ENCODE measurements at regions of chr6 and their contacts with region 1.

Region 1: DNA sequence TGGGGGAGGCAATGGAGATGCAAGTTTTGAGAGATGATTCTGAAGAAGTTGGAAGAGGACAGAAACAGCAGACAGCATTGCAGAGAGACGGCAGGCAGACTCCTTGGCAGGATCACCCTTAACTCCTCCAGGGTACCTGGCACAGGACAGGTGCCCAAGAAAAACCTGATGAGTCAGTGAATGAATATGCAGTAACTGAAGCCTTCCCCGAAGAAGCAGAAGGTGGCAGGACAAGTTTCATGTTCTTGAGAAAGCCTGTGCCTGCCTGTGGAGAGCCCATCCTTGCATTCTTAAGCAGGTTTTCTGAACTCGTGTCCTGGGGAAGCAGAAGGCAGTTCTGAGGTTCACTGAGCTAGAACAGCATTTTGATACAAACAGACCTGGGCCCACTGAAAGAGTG is 79.6 kb upstream of the SASH1 start:
- DNase-seq: no peak
- H3K4me3 ChIP-seq: no peak overlapping the region
- H3K4me3 Mint-ChIP-seq: no peak overlapping the region
- H3K27ac Mint-ChIP-seq: peak overlapping the region; percentile 85
- H3K4me1 ChIP-seq: peaks cover 34% of the 10 kb centered on the region
- H3K4me1 Mint-ChIP-seq: peaks cover 34% of the 10 kb centered on the region
- H3K27me3 ChIP-seq: no peaks in the 10 kb centered on the region
- H3K27me3 Mint-ChIP-seq: no peaks in the 10 kb centered on the region
- CTCF ChIP-seq: no peak

Region 2: GRCh38 chr6:147633179-147633578 is 629.8 kb before region 1 on chr6:
- CTCF ChIA-PET with region 1: no interaction called
- POLR2A ChIA-PET with region 1: no interaction called
- intact Hi-C with region 1: loop called (anchors 5 kb)
- DNase-seq: no peak
- H3K4me3 ChIP-seq: no peak overlapping the region
- H3K4me3 Mint-ChIP-seq: no peak overlapping the region
- H3K27ac Mint-ChIP-seq: no peak overlapping the region
- H3K4me1 ChIP-seq: 0 out of 2 replicates have a peak, but pooled peaks cover 4% of the 10 kb centered on the region
- H3K4me1 Mint-ChIP-seq: no peaks in the 10 kb centered on the region
- H3K27me3 ChIP-seq: no peaks in the 10 kb centered on the region
- H3K27me3 Mint-ChIP-seq: no peaks in the 10 kb centered on the region
- CTCF ChIP-seq: no peak

Region 3: GRCh38 chr6:148004651-148005050 is 258.4 kb before region 1 on chr6:
- CTCF ChIA-PET with region 1: no interaction called
- POLR2A ChIA-PET with region 1: no interaction called
- intact Hi-C with region 1: no loop called
- DNase-seq: no peak
- H3K4me3 ChIP-seq: no peak overlapping the region
- H3K4me3 Mint-ChIP-seq: no peak overlapping the region
- H3K27ac Mint-ChIP-seq: no peak overlapping the region
- H3K4me1 ChIP-seq: no peaks in the 10 kb centered on the region
- H3K4me1 Mint-ChIP-seq: peaks cover 9% of the 10 kb centered on the region
- H3K27me3 ChIP-seq: no peaks in the 10 kb centered on the region
- H3K27me3 Mint-ChIP-seq: no peaks in the 10 kb centered on the region
- CTCF ChIP-seq: no peak

Region 4: DNA sequence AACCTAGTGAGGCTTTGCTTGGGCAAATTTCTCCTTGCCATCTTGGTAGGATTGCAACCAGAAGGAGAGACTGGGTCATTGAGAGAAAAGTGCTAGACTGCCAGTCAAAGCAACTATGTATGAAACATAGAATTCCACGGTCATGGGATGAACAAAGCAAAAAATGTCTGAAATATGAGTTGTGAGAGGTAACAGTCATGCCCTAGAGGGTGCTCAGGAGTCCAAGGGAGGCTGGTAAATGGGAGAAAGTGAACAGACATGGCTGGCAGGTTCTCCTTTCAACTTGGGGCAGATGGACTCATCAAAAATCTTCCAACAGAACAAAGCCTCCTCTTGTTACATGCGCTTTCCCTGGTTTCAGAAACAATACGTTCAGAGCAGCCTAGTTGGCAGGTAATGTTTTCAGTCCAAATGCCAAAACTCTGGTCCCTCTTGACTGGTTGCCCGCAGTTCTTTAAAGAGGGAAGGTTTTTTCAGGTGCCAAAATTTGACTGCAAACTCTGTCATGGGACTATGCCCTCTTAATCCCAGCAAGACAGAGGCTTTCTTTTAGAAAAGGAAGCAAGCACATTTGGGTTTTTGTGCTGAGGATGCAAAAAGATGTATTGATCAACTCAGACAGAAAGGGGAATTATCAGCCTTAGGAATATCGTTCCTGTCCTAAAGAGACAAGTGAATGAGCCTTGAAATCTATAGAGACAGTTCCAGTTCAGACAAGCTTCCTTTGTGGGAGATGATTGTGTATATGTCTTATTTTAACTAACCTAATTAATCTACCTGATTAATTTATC is 11.1 kb after region 1 on chr6:
- CTCF ChIA-PET with region 1: no interaction called
- POLR2A ChIA-PET with region 1: no interaction called
- intact Hi-C with region 1: no loop called
- DNase-seq: no peak
- H3K4me3 ChIP-seq: no peak overlapping the region
- H3K4me3 Mint-ChIP-seq: no peak overlapping the region
- H3K27ac Mint-ChIP-seq: no peak overlapping the region
- H3K4me1 ChIP-seq: no peaks in the 10 kb centered on the region
- H3K4me1 Mint-ChIP-seq: no peaks in the 10 kb centered on the region
- H3K27me3 ChIP-seq: no peaks in the 10 kb centered on the region
- H3K27me3 Mint-ChIP-seq: no peaks in the 10 kb centered on the region
- CTCF ChIP-seq: no peak

Region 5: GRCh38 chr6:148307424-148308204 is 44.6 kb after region 1 on chr6:
- CTCF ChIA-PET with region 1: no interaction called
- POLR2A ChIA-PET with region 1: interaction called, 8 read pairs
- intact Hi-C with region 1: loop called (anchors 1 kb)
- DNase-seq: peak; percentile 58 to 74
- H3K4me3 ChIP-seq: no peak overlapping the region
- H3K4me3 Mint-ChIP-seq: no peak overlapping the region
- H3K27ac Mint-ChIP-seq: peak overlapping the region; percentile 86
- H3K4me1 ChIP-seq: peaks cover 27% of the 10 kb centered on the region
- H3K4me1 Mint-ChIP-seq: peaks cover 25% of the 10 kb centered on the region
- H3K27me3 ChIP-seq: no peaks in the 10 kb centered on the region
- H3K27me3 Mint-ChIP-seq: no peaks in the 10 kb centered on the region
- CTCF ChIP-seq: no peak

Region 6: GRCh38 chr6:148342357-148343046 is 79.5 kb after region 1 on chr6 and contains the start of gene SASH1:
- CTCF ChIA-PET with region 1: no interaction called
- POLR2A ChIA-PET with region 1: no interaction called
- intact Hi-C with region 1: loop called (anchors 1 kb)
- DNase-seq: peak; percentile 82 to 84
- H3K4me3 ChIP-seq: peak within 1 kb of the TSS; percentile 84
- H3K4me3 Mint-ChIP-seq: peak within 1 kb of the TSS; percentile 84
- H3K27ac Mint-ChIP-seq: peak within 1 kb of the TSS; percentile 98
- H3K4me1 ChIP-seq: peaks cover 20% of the 10 kb centered on the region
- H3K4me1 Mint-ChIP-seq: peaks cover 19% of the 10 kb centered on the region
- H3K27me3 ChIP-seq: no peaks in the 10 kb centered on the region
- H3K27me3 Mint-ChIP-seq: no peaks in the 10 kb centered on the region
- CTCF ChIP-seq: no peak
- total RNA-seq, gene SASH1: 41.7 and 42.0 TPM in 2 replicates

Region 7: DNA sequence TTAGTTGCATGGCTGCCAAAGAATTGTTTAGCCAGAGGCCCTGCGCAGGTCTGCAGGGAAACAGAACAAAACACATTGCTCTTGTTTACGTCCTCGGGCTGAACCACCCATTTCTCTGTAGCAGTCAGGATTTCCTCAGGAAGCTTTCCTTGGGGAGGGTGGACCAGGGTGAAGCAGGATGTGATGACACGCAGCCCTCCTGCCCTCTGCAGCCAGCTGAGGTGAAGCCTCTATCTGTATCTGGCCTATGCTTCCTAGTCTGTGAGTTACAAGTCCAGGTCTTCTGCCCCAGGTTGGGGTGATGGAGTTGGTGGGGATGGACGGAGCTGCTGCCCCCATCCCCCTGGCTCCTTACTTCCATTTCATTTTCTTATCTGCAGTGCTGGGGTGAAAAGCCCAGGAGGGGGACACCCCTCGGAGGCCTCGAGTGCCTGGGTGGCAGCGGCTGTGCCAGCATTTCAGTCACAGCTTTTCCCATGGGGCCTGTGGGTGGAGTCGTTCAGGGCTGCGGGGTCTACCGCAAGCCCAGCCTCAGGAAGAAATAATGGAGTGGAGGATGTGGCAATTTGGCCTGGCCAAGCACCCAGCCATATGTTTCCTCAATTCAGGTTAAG is 104.5 kb after region 1 on chr6:
- CTCF ChIA-PET with region 1: no interaction called
- POLR2A ChIA-PET with region 1: interaction called, 12 read pairs
- intact Hi-C with region 1: no loop called
- DNase-seq: no peak
- H3K4me3 ChIP-seq: no peak overlapping the region
- H3K4me3 Mint-ChIP-seq: no peak overlapping the region
- H3K27ac Mint-ChIP-seq: no peak overlapping the region
- H3K4me1 ChIP-seq: no peaks in the 10 kb centered on the region; the same call in 1 of the 2 replicates
- H3K4me1 Mint-ChIP-seq: no peaks in the 10 kb centered on the region
- H3K27me3 ChIP-seq: no peaks in the 10 kb centered on the region
- H3K27me3 Mint-ChIP-seq: no peaks in the 10 kb centered on the region
- CTCF ChIP-seq: no peak

Region 8: GRCh38 chr6:148464319-148465010 is 201.5 kb after region 1 on chr6:
- CTCF ChIA-PET with region 1: no interaction called
- POLR2A ChIA-PET with region 1: no interaction called
- intact Hi-C with region 1: loop called (anchors 1 kb)
- DNase-seq: peak; percentile 58 to 77
- H3K4me3 ChIP-seq: no peak overlapping the region
- H3K4me3 Mint-ChIP-seq: no peak overlapping the region
- H3K27ac Mint-ChIP-seq: peak overlapping the region; percentile 74
- H3K4me1 ChIP-seq: peaks cover 12% of the 10 kb centered on the region
- H3K4me1 Mint-ChIP-seq: peaks cover 13% of the 10 kb centered on the region
- H3K27me3 ChIP-seq: no peaks in the 10 kb centered on the region
- H3K27me3 Mint-ChIP-seq: no peaks in the 10 kb centered on the region
- CTCF ChIP-seq: peak; percentile 87 to 89

Measured in Caco-2 (cell line).